ENCODE measurements at regions of chr20 and their contacts with region 1.

Region 1: DNA sequence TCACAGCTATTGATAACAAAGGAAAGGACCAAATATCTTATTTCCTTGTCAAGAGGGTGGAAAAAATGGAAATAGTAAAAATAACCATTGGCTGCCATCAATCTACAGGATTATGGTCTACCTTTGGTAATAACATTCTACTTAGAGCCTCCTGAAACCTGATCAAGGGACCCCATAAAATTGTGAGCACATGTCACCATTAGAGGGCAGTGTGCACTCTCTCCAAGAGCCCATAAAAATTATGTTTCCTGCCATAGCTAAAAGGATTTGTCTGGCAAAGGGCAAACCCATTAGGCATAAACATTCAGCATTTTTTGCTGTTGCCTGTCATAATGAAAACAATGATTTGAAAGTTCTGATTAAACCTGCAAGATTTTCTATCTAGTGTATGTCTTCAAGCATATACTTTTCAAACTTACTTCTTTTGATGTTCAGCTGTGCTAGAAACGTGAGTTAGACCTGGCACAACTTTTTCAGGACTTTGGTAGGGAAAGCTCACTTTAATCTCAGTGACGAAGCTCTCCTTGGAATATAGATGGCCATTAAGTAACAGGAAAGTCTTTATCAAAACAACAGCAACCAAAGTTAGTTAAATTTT is 120.7 kb upstream of the ZFP64 start:
- DNase-seq: peak; percentile 60
- ATAC-seq: peak; percentile 89
- H3K4me3 ChIP-seq: no peak overlapping the region
- H3K27ac ChIP-seq: no peak overlapping the region
- H3K4me1 ChIP-seq: no peaks in the 10 kb centered on the region
- H3K27me3 ChIP-seq: peaks cover 3% of the 10 kb centered on the region
- CTCF ChIP-seq: peak; percentile 76
- POLR2A ChIP-seq: no peak
- RAD21 ChIP-seq: peak; percentile 79

Region 2: DNA sequence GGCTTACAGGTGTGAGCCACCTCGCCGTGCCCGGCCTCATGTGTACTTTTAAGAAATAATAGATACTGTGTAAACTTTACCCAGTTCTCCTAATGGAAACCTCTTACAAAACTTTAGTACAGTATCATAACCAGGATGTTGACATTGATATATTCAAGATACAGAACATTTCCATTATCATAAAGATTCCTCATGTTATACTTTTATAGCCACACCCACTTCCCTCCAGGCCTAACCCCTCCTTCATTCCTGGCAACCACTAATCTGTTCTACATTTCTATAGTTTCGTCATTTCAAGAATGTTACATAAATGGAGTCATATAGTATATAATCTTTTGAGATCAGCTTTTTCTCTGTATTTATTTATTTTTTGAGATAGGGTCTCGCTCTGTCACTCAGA is 457.3 kb before region 1 on chr20:
- CTCF ChIA-PET with region 1: no interaction called
- POLR2A ChIA-PET with region 1: no interaction called
- dilution Hi-C with region 1: no loop called
- in situ Hi-C with region 1: no loop called
- intact Hi-C with region 1: no loop called
- DNase-seq: no peak
- ATAC-seq: no peak
- H3K4me3 ChIP-seq: no peak overlapping the region
- H3K27ac ChIP-seq: no peak overlapping the region
- H3K4me1 ChIP-seq: no peaks in the 10 kb centered on the region
- H3K27me3 ChIP-seq: peaks cover 6% of the 10 kb centered on the region
- CTCF ChIP-seq: no peak
- POLR2A ChIP-seq: no peak
- RAD21 ChIP-seq: no peak

Region 3: GRCh38 chr20:51978081-51978501 is 334.1 kb before region 1 on chr20:
- CTCF ChIA-PET with region 1: no interaction called
- POLR2A ChIA-PET with region 1: no interaction called
- dilution Hi-C with region 1: no loop called
- in situ Hi-C with region 1: no loop called
- intact Hi-C with region 1: no loop called
- DNase-seq: no peak
- ATAC-seq: no peak
- H3K4me3 ChIP-seq: no peak overlapping the region
- H3K27ac ChIP-seq: no peak overlapping the region
- H3K4me1 ChIP-seq: no peaks in the 10 kb centered on the region
- H3K27me3 ChIP-seq: no peaks in the 10 kb centered on the region
- CTCF ChIP-seq: no peak
- POLR2A ChIP-seq: no peak
- RAD21 ChIP-seq: no peak

Region 4: DNA sequence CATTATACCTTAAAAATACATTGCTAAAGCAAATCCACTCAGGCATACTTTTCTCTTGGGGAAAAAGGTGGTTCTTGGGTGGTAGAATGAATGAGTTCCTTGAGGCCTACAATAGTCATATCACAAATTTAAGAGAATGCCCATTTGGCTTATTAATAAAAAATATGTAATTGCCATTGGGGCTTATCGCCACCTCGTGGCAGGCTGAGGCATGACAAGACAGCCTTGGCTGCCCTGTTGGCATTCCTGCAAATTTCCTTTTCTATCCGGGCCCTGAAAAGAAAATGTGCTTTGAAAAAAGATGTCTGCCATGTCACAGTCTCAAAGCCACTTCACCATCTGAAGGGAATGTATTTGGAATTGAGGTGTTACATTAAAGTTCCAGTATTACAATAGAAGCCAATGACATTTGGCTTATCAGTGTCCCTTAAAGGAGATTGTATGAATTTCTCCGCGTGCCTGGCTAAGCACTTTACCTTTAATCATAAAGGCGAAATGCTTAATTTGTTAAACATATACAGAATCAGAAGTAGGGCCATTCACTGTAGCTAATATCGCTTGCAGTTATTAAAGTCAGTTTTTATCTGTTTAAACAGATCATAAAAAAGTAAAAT is 67.6 kb after region 1 on chr20:
- CTCF ChIA-PET with region 1: interaction called, 3 read pairs
- POLR2A ChIA-PET with region 1: no interaction called
- dilution Hi-C with region 1: no loop called
- in situ Hi-C with region 1: no loop called
- intact Hi-C with region 1: loop called (anchors 2 kb)
- DNase-seq: peak; percentile 17
- ATAC-seq: peak; percentile 63; the same call in 1 of the 2 replicates
- H3K4me3 ChIP-seq: no peak overlapping the region
- H3K27ac ChIP-seq: no peak overlapping the region
- H3K4me1 ChIP-seq: no peaks in the 10 kb centered on the region
- H3K27me3 ChIP-seq: no peaks in the 10 kb centered on the region
- CTCF ChIP-seq: peak; percentile 74
- POLR2A ChIP-seq: no peak
- RAD21 ChIP-seq: peak; percentile 53

Region 5: DNA sequence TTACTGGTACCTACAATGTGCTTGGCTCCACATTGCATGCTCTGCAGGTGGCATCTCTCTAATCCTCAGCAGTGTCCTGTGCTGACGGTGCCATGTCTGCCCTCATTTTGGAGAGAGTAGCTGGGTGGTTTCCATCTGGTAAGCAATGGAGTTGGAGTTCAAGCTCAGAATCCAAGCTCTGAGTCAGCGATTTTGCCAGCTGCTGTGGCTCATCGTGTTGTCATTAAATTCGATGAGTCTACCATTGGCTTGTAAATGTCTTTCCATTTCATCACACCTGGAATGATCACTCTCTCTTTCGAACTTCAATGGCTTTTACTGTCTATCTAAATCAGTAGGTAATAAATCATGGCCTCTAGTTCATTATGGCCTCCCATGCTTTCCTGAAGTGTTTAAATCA is 281.4 kb after region 1 on chr20:
- CTCF ChIA-PET with region 1: no interaction called
- POLR2A ChIA-PET with region 1: no interaction called
- dilution Hi-C with region 1: no loop called
- in situ Hi-C with region 1: no loop called
- intact Hi-C with region 1: no loop called
- DNase-seq: no peak
- ATAC-seq: no peak
- H3K4me3 ChIP-seq: no peak overlapping the region
- H3K27ac ChIP-seq: no peak overlapping the region
- H3K4me1 ChIP-seq: no peaks in the 10 kb centered on the region
- H3K27me3 ChIP-seq: no peaks in the 10 kb centered on the region
- CTCF ChIP-seq: no peak
- POLR2A ChIP-seq: no peak
- RAD21 ChIP-seq: no peak

Region 6: GRCh38 chr20:52799130-52799529 is 486.9 kb after region 1 on chr20:
- CTCF ChIA-PET with region 1: no interaction called
- POLR2A ChIA-PET with region 1: no interaction called
- dilution Hi-C with region 1: no loop called
- in situ Hi-C with region 1: no loop called
- intact Hi-C with region 1: loop called (anchors 10 kb)
- DNase-seq: no peak
- ATAC-seq: no peak
- H3K4me3 ChIP-seq: no peak overlapping the region
- H3K27ac ChIP-seq: no peak overlapping the region
- H3K4me1 ChIP-seq: no peaks in the 10 kb centered on the region
- H3K27me3 ChIP-seq: no peaks in the 10 kb centered on the region
- CTCF ChIP-seq: no peak
- POLR2A ChIP-seq: no peak
- RAD21 ChIP-seq: no peak

Region 7: GRCh38 chr20:52983726-52984450 is 671.7 kb after region 1 on chr20:
- CTCF ChIA-PET with region 1: no interaction called
- POLR2A ChIA-PET with region 1: no interaction called
- dilution Hi-C with region 1: no loop called
- in situ Hi-C with region 1: no loop called
- intact Hi-C with region 1: no loop called
- DNase-seq: no peak
- ATAC-seq: no peak
- H3K4me3 ChIP-seq: no peak overlapping the region
- H3K27ac ChIP-seq: no peak overlapping the region
- H3K4me1 ChIP-seq: no peaks in the 10 kb centered on the region
- H3K27me3 ChIP-seq: no peaks in the 10 kb centered on the region
- CTCF ChIP-seq: no peak
- POLR2A ChIP-seq: no peak
- RAD21 ChIP-seq: no peak

Region 8: GRCh38 chr20:53216856-53217576 is 904.8 kb after region 1 on chr20:
- CTCF ChIA-PET with region 1: interaction called, 6 read pairs
- POLR2A ChIA-PET with region 1: no interaction called
- dilution Hi-C with region 1: no loop called
- in situ Hi-C with region 1: loop called (anchors 25 kb)
- intact Hi-C with region 1: loop called (anchors 1 kb)
- DNase-seq: no peak
- ATAC-seq: no peak
- H3K4me3 ChIP-seq: no peak overlapping the region
- H3K27ac ChIP-seq: no peak overlapping the region
- H3K4me1 ChIP-seq: no peaks in the 10 kb centered on the region
- H3K27me3 ChIP-seq: no peaks in the 10 kb centered on the region; the same call in 1 of the 2 replicates
- CTCF ChIP-seq: peak; percentile 58
- POLR2A ChIP-seq: no peak
- RAD21 ChIP-seq: peak; percentile 54

Region 9: DNA sequence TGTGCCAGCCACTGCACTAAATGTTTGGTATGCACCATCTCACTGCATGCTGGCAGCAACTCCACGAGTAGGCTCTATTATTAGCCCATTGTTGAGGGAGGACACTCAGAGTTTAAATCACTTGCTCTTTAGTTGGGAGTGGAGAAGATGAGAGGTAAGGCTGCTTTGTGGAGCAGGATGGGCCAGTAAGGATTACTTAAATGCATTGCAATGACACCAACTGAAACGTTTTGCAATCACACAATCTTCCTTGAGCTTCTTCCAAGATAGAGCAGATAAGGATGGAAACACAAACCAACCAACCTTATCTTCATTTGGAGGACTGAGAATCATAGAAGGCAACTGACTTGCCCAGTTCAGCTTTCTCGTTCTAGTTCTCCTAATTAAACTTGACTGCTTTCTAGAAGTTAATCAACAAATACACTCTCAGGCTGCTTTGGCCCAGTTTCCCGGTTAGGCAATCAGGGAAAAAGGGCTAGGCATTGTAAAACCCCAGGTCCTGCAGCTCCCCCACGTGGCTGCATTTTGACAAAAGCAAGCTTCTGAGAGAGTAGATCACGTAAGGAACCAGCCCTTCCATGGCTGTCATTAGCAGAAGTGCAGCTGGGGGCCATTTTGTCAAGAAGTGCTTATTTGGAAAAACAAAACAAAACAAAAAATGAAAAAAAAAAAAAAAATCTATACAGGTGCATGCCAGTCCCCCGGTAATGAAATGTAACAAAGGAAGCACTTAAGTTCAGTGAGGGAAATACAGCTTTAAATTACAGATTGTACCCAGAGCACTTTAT is 1627.5 kb after region 1 on chr20:
- CTCF ChIA-PET with region 1: no interaction called
- POLR2A ChIA-PET with region 1: no interaction called
- dilution Hi-C with region 1: no loop called
- in situ Hi-C with region 1: no loop called
- intact Hi-C with region 1: loop called (anchors 2 kb)
- DNase-seq: peak; percentile 94
- ATAC-seq: peak; percentile 89
- H3K4me3 ChIP-seq: no peak overlapping the region
- H3K27ac ChIP-seq: peak overlapping the region; percentile 66
- H3K4me1 ChIP-seq: peaks cover 16% of the 10 kb centered on the region
- H3K27me3 ChIP-seq: no peaks in the 10 kb centered on the region
- CTCF ChIP-seq: peak; percentile 92
- POLR2A ChIP-seq: 0 out of 2 replicates have a peak, but pooled peaks have one; percentile 61
- RAD21 ChIP-seq: peak; percentile 95

Measured in IMR-90 (cell line).